ENCODE measurements at regions of chr19 and their contacts with region 1.

Region 1: GRCh38 chr19:46088101-46088500 is 36.4 kb downstream of the IGFL3 start:
- DNase-seq: no peak
- ATAC-seq: no peak
- H3K4me3 ChIP-seq: no peak overlapping the region
- H3K27ac ChIP-seq: no peak overlapping the region
- H3K4me1 ChIP-seq: no peaks in the 10 kb centered on the region
- H3K27me3 ChIP-seq: peaks cover 0 to 26% (median 0%) of the 10 kb centered on the region in 9 donors
- CTCF ChIP-seq: no peak
- POLR2A ChIP-seq: no peak

Region 2: DNA sequence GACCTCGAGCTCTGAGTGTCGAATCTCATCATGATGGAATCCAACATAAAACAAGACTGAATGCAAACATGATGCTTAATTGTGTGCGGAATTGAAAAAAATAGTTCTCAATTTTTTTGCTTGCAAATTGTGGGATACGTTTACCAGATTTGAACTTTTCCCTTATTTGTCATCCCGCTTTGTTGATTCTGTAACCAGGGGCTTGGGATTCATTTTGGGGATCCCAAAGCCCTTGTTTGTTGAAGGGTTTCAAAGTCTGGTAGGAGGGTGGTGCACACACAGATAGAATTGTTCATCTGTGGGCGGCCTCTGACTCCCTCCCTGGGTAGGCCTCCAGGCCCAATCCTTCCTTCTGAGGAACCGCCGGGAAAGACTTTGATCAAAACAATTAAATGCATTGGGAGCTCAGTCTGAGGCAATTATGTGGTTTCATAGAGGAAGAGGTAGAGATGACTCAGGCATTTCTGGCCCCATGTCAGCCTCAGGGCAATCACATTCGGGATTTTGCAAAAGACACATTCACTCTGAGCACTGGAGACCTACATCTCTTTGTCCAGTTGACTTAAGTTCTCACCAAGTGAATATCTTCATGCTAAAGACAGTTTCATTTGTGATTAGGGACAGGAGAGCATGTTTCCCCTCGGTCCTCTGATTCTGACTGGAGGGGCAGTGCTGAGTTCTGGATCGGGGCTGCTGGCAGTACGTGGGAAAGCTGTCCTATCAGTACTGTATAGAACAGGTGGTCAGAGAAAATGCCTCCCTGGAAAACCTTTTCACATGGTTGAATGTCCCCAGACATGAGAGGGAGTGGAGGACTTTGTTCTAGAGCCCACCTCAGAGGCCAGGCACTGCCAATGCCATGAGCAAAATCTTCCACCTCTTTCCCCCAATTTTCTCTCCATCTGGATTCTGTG is 19.5 kb before region 1 on chr19:
- intact Hi-C with region 1: no loop called
- DNase-seq: no peak
- ATAC-seq: no peak
- H3K4me3 ChIP-seq: no peak overlapping the region
- H3K27ac ChIP-seq: no peak overlapping the region
- H3K4me1 ChIP-seq: no peaks in the 10 kb centered on the region
- H3K27me3 ChIP-seq: peaks cover 0 to 72% (median 13%) of the 10 kb centered on the region in 9 donors
- CTCF ChIP-seq: no peak
- POLR2A ChIP-seq: no peak

Region 3: DNA sequence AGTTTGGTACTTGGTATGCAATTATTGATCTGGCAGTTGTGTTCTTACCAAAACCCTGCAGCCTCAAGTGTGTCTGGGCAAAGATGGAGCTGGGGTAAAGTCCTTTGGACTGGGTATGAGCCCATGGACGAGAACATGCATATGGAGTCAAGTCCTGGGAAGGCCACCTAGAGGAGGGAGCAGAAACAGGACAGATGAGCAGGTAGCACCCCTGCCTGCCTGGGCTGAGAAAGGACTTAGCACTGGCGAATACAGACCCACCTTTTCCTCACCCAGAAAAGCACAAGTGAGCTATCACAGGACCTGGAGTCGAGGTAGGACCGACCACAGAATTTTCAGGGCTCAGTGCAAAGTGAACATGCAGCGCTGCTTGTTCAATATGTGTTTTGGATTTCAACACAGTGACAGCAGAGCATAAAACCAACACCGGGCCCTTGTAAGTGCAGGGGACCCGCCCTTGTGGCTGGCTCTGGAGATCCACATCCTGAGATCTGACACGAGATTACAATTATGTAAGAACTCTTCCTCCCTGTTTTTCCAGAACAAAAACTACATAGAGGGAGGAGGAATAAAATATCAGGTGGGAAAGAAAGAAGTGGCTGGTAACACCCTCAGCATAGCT is 85.9 kb after region 1 on chr19:
- intact Hi-C with region 1: no loop called
- DNase-seq: no peak
- ATAC-seq: no peak
- H3K4me3 ChIP-seq: no peak overlapping the region
- H3K27ac ChIP-seq: no peak overlapping the region
- H3K4me1 ChIP-seq: no peaks in the 10 kb centered on the region
- H3K27me3 ChIP-seq: peaks cover 0 to 34% (median 2%) of the 10 kb centered on the region in 9 donors
- CTCF ChIP-seq: no peak
- POLR2A ChIP-seq: no peak

Region 4: DNA sequence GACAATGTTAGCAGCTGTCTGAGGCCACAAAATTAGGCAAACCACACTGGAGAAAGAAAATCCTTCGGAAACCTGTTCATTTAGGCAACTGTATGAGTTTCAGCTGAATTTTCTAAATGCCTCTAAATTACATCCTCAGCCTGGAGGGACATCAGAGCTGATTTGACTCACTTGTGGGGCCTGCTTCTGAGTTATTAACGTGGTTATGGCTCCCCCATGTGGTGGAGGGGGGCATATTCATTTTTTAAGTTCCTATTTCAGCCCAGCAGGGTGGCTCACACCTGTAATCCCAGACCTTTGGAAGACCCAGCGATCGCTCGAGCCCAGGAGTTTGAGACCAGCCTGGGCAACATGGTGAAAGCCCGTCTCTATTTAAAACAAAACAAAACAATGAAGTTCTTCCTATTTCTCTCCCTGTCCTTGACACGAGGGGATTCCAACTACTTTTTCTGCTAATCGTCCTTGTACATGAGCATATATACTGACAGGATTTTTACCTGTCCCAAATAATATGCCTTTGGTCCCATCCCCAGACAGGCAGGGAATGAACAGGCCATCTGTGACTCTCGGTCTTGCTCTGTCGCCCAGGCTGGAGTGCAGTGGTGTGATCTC is 177.2 kb after region 1 on chr19:
- intact Hi-C with region 1: loop called in 6 of 10 experiments (anchors 2 to 5 kb)
- DNase-seq: peak in 4 of 5 donors; percentile 38 to 54 (median 48)
- ATAC-seq: peak; percentile 71 to 89 (median 74)
- H3K4me3 ChIP-seq: no peak overlapping the region
- H3K27ac ChIP-seq: no peak overlapping the region
- H3K4me1 ChIP-seq: peaks cover 0 to 4% (median 0%) of the 10 kb centered on the region in 12 donors
- H3K27me3 ChIP-seq: peaks cover 0 to 38% (median 7%) of the 10 kb centered on the region in 9 donors
- CTCF ChIP-seq: peak; percentile 79 to 88 (median 86)
- POLR2A ChIP-seq: no peak